ENCODE measurements at regions of chr3 and their contacts with region 1.

Region 1: GRCh38 chr3:63911873-63912767 is at the start of gene SCAANT1:
- DNase-seq: peak; percentile 75 to 97 (median 83)

Region 2: DNA sequence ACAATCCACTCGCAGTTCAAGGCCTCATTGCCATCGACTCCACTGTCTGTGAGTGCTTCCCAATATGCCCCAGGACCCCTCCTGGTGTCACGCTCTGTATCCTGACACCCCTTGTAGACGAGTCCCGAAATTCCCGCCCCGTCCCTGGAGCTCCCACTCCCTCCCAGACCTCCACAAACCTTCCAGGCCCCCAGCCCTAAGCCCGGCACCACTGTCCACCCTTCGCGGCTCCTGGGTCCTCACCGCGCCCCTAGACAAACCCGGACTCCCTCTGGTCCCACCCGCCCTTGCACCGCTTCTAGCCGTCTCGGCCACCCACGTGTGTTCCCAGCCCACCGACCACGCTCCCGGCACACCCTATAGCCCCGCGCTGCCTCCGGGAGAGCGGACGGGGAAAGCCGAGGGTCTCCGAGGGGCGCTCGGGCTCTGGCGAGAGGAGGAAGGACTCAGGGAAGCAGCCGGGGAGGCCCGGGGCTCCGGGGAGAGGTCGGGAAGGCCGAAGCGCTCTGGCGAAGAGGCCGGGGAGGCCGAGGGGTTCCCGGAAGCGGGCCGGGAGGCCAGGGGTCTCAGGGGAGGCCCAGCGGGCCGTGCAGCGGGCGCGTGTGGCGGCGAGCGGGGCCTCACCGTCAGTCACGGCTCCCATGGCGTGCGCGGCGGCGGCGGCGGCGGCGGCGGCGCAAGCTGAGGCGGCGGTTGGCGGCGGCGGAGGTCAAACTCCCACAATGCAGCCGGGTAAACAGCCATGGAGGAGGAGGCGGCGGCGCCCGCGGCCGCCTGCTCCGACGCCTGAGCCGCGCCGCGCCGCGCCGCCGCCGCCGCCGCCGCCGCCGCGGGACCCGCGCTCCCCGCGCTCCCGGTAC is 48.7 kb before region 1 on chr3 and contains the starts of genes ATXN7 and THOC7:
- intact Hi-C with region 1: loop called (anchors 1 kb)
- DNase-seq: peak; percentile 49 to 94 (median 62)

Measured in posterior cingulate gyrus (tissue), 11 donors.